Activated B cell treated with CpG ODN at 0.5 μM for 24 hours (primary cell): ENCODE measurements at regions of chr1 and their contacts with region 1.

Region 1: GRCh38 chr1:97920832-97921571 is at the start of gene DPYD:
- DNase-seq: peak; percentile 80
- ATAC-seq: peak; percentile 89
- H3K4me3 Mint-ChIP-seq: peak within 1 kb of the TSS; percentile 93
- H3K27ac Mint-ChIP-seq: peak within 1 kb of the TSS; percentile 89
- H3K4me1 Mint-ChIP-seq: peaks cover 22% of the 10 kb centered on the region
- H3K27me3 Mint-ChIP-seq: no peaks in the 10 kb centered on the region
- CTCF ChIP-seq: no peak
- total RNA-seq, gene DPYD: 10.3 and 12.6 TPM in 2 replicates

Region 2: DNA sequence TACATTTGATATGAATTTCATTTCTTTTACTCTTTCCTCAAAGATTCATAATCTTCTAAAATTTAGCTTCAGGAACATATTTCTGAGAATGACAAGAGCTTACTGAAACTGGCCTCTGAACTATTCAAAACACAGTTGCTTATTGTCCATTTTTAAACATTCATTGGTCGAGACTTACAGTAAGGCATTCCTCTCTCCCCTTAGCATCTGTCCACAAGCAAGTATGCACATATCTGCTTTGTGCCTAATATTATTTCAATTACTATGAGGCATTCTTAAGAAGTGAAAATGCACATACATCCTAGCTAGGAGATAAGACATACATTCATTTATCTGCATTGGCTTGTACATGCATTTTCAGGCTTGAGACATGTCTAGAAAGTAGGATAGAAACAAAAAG is 710.7 kb before region 1 on chr1:
- CTCF ChIA-PET with region 1: no interaction called
- POLR2A ChIA-PET with region 1: no interaction called
- intact Hi-C with region 1: no loop called
- DNase-seq: no peak
- ATAC-seq: no peak
- H3K4me3 Mint-ChIP-seq: no peak overlapping the region
- H3K27ac Mint-ChIP-seq: no peak overlapping the region
- H3K4me1 Mint-ChIP-seq: no peaks in the 10 kb centered on the region
- H3K27me3 Mint-ChIP-seq: no peaks in the 10 kb centered on the region
- CTCF ChIP-seq: no peak

Region 3: GRCh38 chr1:97758541-97759057 is 162.4 kb before region 1 on chr1:
- CTCF ChIA-PET with region 1: no interaction called
- POLR2A ChIA-PET with region 1: no interaction called
- intact Hi-C with region 1: no loop called
- DNase-seq: no peak
- ATAC-seq: no peak
- H3K4me3 Mint-ChIP-seq: no peak overlapping the region
- H3K27ac Mint-ChIP-seq: no peak overlapping the region
- H3K4me1 Mint-ChIP-seq: no peaks in the 10 kb centered on the region
- H3K27me3 Mint-ChIP-seq: no peaks in the 10 kb centered on the region
- CTCF ChIP-seq: no peak

Region 4: DNA sequence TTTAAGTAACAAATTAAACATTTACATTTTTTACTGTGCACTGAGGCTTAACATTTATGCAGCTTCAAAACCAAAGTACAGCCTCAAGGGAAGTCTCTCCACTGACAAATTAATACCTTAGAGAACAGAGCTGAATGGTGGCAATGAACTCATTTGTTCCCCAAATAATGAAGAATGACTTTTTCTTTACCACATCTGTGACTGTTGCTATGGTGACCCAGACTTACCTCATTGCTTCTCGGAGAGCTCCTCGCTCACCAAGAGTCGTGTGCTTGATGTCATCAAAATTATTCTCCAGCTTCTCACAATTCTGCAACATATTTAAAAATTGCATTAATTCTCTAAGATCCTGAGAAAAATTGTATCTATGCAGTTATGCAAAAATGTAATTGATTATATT is 93.1 kb before region 1 on chr1:
- CTCF ChIA-PET with region 1: no interaction called
- POLR2A ChIA-PET with region 1: no interaction called
- intact Hi-C with region 1: loop called (anchors 1 kb)
- DNase-seq: no peak
- ATAC-seq: peak; percentile 80
- H3K4me3 Mint-ChIP-seq: no peak overlapping the region
- H3K27ac Mint-ChIP-seq: no peak overlapping the region
- H3K4me1 Mint-ChIP-seq: peaks cover 6% of the 10 kb centered on the region
- H3K27me3 Mint-ChIP-seq: no peaks in the 10 kb centered on the region
- CTCF ChIP-seq: no peak